ENCODE measurements at regions of chr1 and their contacts with region 1.

Region 1: DNA sequence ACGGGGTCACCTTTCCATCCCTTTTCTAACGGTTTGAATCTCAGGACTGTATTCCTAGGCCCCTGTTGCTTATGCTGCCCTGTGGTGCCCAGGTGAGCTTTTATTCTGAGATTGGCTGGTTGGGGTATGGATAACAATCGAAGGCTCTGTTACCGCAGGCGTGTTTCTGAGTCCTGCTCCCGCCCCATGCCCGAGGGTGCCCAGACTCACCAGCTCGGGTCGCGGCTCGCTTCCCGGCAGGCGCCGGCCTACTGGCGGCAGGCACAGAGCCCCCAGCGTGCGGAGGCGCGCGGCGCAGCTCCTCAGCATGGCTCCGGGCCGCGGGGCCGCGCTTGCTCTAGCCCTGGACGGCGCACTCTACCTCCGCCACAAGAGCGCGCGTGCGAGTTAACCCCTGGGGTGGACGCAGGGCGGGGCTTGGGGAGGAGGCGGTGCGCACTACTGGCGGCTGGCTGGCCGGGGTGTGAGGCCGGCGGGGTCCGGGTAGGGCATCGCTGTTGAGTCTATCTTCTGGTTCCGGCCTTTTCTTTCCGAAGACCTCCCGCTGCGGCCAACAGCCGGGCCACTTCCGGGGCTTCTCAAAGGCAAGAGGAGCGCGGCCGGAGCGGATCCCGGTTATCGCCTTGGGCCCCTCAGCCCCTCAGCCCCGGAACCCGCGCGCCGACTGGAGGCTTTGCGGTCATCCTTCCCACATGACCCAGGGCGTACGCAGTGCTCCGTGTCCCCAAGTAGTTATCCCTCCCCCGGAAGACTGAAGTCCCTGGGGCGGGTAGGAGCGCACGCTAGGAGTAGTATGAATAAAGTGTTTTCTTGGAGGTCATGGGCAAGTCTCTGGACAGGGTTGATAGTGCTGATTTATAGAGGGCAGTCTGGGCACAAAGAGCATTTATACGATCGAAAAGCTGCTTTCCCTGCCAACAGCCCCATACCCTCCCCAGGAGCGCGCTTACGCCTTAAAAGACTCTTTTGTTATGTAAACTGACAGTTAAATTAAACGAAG is at the start of gene THEM4:
- DNase-seq: peak; percentile 99
- H3K4me3 Mint-ChIP-seq: peak within 1 kb of the TSS; percentile 99
- H3K27ac Mint-ChIP-seq: peak within 1 kb of the TSS; percentile 99
- H3K4me1 Mint-ChIP-seq: peaks cover 17% of the 10 kb centered on the region
- H3K27me3 Mint-ChIP-seq: no peaks in the 10 kb centered on the region
- CTCF ChIP-seq: peak; percentile 25
- total RNA-seq, gene THEM4: 27.5 and 29.1 TPM in 2 replicates

Region 2: GRCh38 chr1:151888972-151889570 is 20.4 kb before region 1 on chr1:
- CTCF ChIA-PET with region 1: interaction called, 48 read pairs
- POLR2A ChIA-PET with region 1: interaction called, 74 read pairs
- intact Hi-C with region 1: loop called (anchors 2 kb)
- DNase-seq: peak; percentile 42
- H3K4me3 Mint-ChIP-seq: no peak overlapping the region
- H3K27ac Mint-ChIP-seq: no peak overlapping the region
- H3K4me1 Mint-ChIP-seq: peaks cover 30% of the 10 kb centered on the region
- H3K27me3 Mint-ChIP-seq: no peaks in the 10 kb centered on the region
- CTCF ChIP-seq: peak; percentile 53

Region 3: GRCh38 chr1:151924679-151925587 is 15.5 kb after region 1 on chr1:
- CTCF ChIA-PET with region 1: interaction called, 6 read pairs
- POLR2A ChIA-PET with region 1: interaction called, 46 read pairs
- intact Hi-C with region 1: no loop called
- DNase-seq: no peak
- H3K4me3 Mint-ChIP-seq: no peak overlapping the region
- H3K27ac Mint-ChIP-seq: no peak overlapping the region
- H3K4me1 Mint-ChIP-seq: peaks cover 5% of the 10 kb centered on the region
- H3K27me3 Mint-ChIP-seq: no peaks in the 10 kb centered on the region
- CTCF ChIP-seq: no peak

Region 4: GRCh38 chr1:151939779-151940178 is 30.3 kb after region 1 on chr1:
- CTCF ChIA-PET with region 1: interaction called, 13 read pairs
- POLR2A ChIA-PET with region 1: interaction called, 46 read pairs
- intact Hi-C with region 1: no loop called
- DNase-seq: no peak
- H3K4me3 Mint-ChIP-seq: no peak overlapping the region
- H3K27ac Mint-ChIP-seq: no peak overlapping the region
- H3K4me1 Mint-ChIP-seq: peaks cover 13% of the 10 kb centered on the region
- H3K27me3 Mint-ChIP-seq: no peaks in the 10 kb centered on the region
- CTCF ChIP-seq: no peak

Region 5: DNA sequence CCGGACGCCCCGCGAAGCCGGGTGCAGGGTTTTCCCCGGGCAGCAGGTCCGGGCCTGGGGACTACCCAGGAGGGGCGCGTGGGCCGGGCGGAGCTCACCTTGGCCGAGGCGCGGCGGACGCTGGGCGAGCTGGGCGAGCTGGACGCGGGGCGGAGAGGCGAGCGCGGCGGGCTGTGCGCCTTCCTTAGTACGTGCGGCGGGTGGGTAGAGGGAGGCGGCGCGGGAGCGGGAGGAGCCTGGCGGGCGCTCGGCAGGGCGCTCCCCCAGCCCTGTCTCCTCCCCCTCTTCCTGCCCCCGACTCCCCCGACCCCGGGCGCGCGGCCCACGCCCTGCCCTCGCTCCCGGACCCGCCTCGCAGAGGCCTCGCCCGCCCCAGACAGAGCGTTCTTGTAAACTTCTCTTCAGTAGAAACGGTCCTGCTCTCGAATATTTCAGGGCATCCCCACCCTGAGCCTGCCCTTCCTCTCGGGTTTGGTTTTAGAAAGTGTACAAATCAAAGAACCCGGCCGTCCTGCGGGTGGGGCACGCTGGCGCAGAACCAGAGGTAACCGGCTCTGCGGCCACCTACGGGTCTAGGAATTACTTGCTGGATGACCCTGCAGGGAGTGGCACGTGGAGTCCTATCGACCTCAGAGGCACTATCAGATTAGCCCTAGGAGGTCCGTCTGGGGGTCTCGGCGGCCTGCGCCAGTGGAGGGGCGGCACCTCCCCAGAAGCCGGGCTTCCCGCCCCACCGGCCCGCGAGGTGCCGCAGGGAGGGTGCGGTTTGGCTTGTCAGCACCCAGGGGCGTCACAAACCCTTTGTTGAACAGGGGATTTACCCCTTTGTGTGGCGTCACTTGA is 84.4 kb after region 1 on chr1 and contains the start of gene S100A10:
- CTCF ChIA-PET with region 1: interaction called, 72 read pairs
- POLR2A ChIA-PET with region 1: interaction called, 63 read pairs
- intact Hi-C with region 1: loop called (anchors 1 kb)
- DNase-seq: peak; percentile 86
- H3K4me3 Mint-ChIP-seq: peak within 1 kb of the TSS; percentile 89
- H3K27ac Mint-ChIP-seq: peak within 1 kb of the TSS; percentile 96
- H3K4me1 Mint-ChIP-seq: peaks cover 54% of the 10 kb centered on the region
- H3K27me3 Mint-ChIP-seq: no peaks in the 10 kb centered on the region
- CTCF ChIP-seq: no peak
- total RNA-seq, gene S100A10: 1,693 and 1,694 TPM in 2 replicates

Region 6: DNA sequence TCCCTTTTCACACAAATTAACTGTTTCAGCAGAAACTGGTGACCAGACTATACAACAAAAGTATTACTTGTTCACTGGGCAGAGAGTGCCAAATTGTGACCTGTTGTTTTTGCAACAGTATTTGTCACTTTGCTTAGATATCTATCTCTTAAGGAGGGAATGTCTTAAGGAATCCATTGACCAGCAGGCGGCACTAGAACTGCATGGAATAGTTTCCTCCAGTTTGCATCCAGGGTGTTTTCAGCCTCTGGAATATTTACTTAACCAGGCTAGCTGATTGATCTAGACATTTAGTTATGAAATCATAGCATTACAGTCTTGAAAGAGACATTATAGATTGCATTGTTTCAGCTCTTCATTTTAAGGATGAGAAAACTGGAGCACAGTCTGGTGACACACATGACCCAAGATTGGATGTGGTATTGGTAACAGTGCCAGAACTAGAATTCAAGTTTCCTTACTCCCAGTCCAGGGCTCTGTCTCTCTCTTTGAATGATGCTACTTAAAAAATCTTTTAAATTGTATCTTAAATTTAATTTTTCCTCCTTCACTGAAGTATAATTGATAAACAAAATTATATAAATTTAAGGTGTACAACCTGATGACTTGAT is 232.6 kb after region 1 on chr1:
- CTCF ChIA-PET with region 1: no interaction called
- POLR2A ChIA-PET with region 1: no interaction called
- intact Hi-C with region 1: no loop called
- DNase-seq: peak; percentile 94
- H3K4me3 Mint-ChIP-seq: no peak overlapping the region
- H3K27ac Mint-ChIP-seq: no peak overlapping the region
- H3K4me1 Mint-ChIP-seq: peaks cover 8% of the 10 kb centered on the region
- H3K27me3 Mint-ChIP-seq: peaks cover 8% of the 10 kb centered on the region
- CTCF ChIP-seq: peak; percentile 93

Region 7: DNA sequence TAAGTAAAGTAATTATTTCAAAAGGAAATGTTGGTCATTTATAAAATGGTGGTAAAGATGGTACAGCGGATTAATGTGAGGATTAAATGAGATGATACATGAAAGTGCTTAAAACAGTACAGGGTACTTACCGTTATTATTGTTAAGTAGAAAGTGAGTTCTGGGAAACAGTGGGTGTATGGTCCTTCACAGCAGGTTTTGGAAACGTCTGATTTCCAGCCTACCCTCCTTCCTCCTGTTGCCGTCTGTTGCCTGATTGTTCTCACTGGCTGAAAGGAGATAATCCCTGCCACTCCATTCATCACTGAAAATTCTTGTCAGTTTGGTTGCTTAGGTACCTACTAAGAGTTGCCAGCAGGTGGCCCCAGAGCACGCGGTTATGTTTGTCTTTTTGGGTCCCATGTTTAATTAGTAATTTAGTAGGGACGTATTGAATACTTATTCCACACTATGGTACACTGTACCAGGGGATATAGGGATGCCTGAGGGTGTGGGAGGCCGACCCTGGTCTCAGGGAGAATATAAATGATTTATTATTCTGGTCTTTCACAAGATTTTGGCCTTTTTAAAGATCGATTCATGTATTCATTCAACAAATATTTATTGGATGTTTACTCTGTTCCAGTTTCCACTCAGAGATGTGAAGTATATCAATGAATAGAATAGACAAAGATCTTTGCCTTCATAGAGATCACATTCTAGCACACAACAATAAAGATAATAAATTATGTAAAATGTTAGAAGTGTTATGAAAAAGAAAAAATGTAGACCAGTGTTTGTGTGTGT is 280.4 kb after region 1 on chr1:
- CTCF ChIA-PET with region 1: no interaction called
- POLR2A ChIA-PET with region 1: no interaction called
- intact Hi-C with region 1: no loop called
- DNase-seq: peak; percentile 90
- H3K4me3 Mint-ChIP-seq: peak overlapping the region; percentile 60
- H3K27ac Mint-ChIP-seq: peak overlapping the region; percentile 1
- H3K4me1 Mint-ChIP-seq: peaks cover 41% of the 10 kb centered on the region
- H3K27me3 Mint-ChIP-seq: peaks cover 11% of the 10 kb centered on the region
- CTCF ChIP-seq: peak; percentile 91

Region 8: DNA sequence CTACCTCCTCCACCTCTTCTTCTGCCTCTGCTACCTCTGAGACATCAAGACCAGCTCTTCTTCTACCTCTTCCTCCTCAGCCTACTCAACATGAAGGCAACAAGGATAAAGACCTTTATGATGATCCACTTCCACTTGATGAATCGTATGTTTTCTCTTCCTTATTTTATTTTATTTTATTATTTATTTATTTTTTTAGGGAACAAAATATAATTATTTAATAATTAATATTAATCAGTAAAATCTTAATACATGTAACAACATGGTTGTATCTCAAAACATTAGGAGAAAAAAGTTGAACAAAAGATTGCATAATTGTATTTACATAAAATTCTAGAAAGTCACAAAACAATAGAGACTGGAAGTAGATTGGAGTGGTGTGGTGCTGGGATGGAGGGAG is 327.6 kb after region 1 on chr1:
- CTCF ChIA-PET with region 1: no interaction called
- POLR2A ChIA-PET with region 1: no interaction called
- intact Hi-C with region 1: no loop called
- DNase-seq: no peak
- H3K4me3 Mint-ChIP-seq: no peak overlapping the region
- H3K27ac Mint-ChIP-seq: no peak overlapping the region
- H3K4me1 Mint-ChIP-seq: no peaks in the 10 kb centered on the region
- H3K27me3 Mint-ChIP-seq: no peaks in the 10 kb centered on the region
- CTCF ChIP-seq: no peak

Measured in MCF 10A (cell line).